WTC11 (cell line): ENCODE measurements at regions of chr2 and their contacts with region 1.

Region 1: GRCh38 chr2:79189465-79189864 is 29.9 kb upstream of the REG3A start:
- DNase-seq: no peak
- ATAC-seq: peak; percentile 57; the same call in 1 of the 2 replicates
- H3K4me3 Mint-ChIP-seq: no peak overlapping the region
- H3K27ac Mint-ChIP-seq: no peak overlapping the region
- H3K4me1 Mint-ChIP-seq: peaks cover 16% of the 10 kb centered on the region
- H3K27me3 Mint-ChIP-seq: peaks cover 44% of the 10 kb centered on the region
- CTCF ChIP-seq: no peak

Region 2: GRCh38 chr2:79162132-79162531 is 27.3 kb before region 1 on chr2:
- CTCF ChIA-PET with region 1: no interaction called
- POLR2A ChIA-PET with region 1: no interaction called
- DNase-seq: no peak
- ATAC-seq: no peak
- H3K4me3 Mint-ChIP-seq: no peak overlapping the region
- H3K27ac Mint-ChIP-seq: no peak overlapping the region
- H3K4me1 Mint-ChIP-seq: no peaks in the 10 kb centered on the region
- H3K27me3 Mint-ChIP-seq: no peaks in the 10 kb centered on the region; the same call in 1 of the 2 replicates
- CTCF ChIP-seq: no peak

Region 3: GRCh38 chr2:79200762-79201161 is 11.3 kb after region 1 on chr2:
- CTCF ChIA-PET with region 1: interaction called, 10 read pairs
- POLR2A ChIA-PET with region 1: no interaction called
- DNase-seq: no peak
- ATAC-seq: peak; percentile 34; the same call in 1 of the 2 replicates
- H3K4me3 Mint-ChIP-seq: peak overlapping the region; percentile 24; the same call in 1 of the 2 replicates
- H3K27ac Mint-ChIP-seq: peak overlapping the region; percentile 81
- H3K4me1 Mint-ChIP-seq: peaks cover 42% of the 10 kb centered on the region
- H3K27me3 Mint-ChIP-seq: no peaks in the 10 kb centered on the region
- CTCF ChIP-seq: no peak